A673 (cell line): ENCODE measurements at regions of chr10 and their contacts with region 1.

Region 1: GRCh38 chr10:102583435-102584417 is 60.6 kb upstream of the TRIM8 start:
- DNase-seq: peak; percentile 90
- H3K4me3 ChIP-seq: no peak overlapping the region
- H3K27ac ChIP-seq: no peak overlapping the region
- H3K4me1 ChIP-seq: peaks cover 18% of the 10 kb centered on the region
- H3K27me3 ChIP-seq: no peaks in the 10 kb centered on the region
- CTCF ChIP-seq: peak; percentile 87

Region 2: DNA sequence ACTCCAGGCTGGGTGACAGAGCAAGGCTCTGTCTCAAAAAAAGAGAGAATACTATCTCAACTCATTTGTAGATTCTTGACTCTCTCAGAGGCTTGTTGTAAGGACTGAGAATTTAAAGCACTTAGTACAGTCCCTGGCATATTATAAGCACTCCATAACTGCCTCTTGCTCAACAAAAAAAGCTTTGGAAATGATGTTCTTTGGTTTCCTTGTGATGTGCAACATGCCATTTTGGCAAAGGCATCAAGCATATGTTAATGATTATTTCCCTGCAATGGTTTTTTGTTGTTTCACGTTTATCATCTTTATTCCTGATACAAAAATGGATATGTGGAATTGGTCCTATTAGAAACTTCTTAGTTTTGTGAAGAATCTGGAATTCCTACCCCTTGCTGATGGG is 415.9 kb before region 1 on chr10:
- CTCF ChIA-PET with region 1: interaction called, 5 read pairs
- POLR2A ChIA-PET with region 1: no interaction called
- intact Hi-C with region 1: loop called (anchors 10 kb)
- DNase-seq: no peak
- H3K4me3 ChIP-seq: no peak overlapping the region
- H3K27ac ChIP-seq: no peak overlapping the region
- H3K4me1 ChIP-seq: no peaks in the 10 kb centered on the region
- H3K27me3 ChIP-seq: no peaks in the 10 kb centered on the region
- CTCF ChIP-seq: no peak

Region 3: DNA sequence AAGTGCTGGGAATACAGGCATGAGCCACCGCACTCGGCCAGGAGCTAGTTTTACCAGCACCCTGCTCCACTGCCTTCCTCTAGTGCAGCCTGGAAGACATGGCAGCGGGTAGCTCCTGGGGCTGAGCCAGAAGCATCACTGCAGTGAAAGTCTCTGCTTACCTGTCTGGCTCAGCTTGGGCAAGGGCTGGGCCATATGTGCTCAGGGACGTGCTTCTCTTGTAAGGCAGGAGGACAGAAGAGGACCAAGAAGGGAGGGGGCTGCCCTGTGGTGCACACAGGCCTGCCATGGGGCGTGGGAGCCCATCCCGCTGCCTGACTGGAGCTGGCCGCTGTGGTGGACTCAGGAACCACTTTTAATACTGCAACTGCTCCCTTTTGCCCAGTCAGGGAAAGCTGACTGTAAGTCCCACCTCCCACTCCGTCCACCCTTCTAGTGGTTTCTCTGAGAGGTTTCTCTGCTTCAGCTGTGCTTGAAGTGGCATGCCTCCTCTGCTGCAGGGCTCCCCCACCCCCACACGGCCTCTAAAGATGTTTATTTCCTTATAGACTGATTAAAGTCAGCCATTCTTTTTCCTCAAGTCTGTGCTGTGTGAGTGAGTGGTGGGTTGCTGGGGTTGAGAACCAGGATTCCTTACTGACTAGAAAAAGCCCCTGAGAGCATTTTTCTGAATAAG is 107.1 kb before region 1 on chr10:
- CTCF ChIA-PET with region 1: interaction called, 13 read pairs
- POLR2A ChIA-PET with region 1: no interaction called
- intact Hi-C with region 1: loop called (anchors 5 kb)
- DNase-seq: no peak
- H3K4me3 ChIP-seq: no peak overlapping the region
- H3K27ac ChIP-seq: no peak overlapping the region
- H3K4me1 ChIP-seq: no peaks in the 10 kb centered on the region
- H3K27me3 ChIP-seq: no peaks in the 10 kb centered on the region
- CTCF ChIP-seq: no peak

Region 4: GRCh38 chr10:102484021-102484420 is 99.7 kb before region 1 on chr10:
- CTCF ChIA-PET with region 1: interaction called, 4 read pairs
- POLR2A ChIA-PET with region 1: no interaction called
- intact Hi-C with region 1: loop called (anchors 5 kb)
- DNase-seq: no peak
- H3K4me3 ChIP-seq: no peak overlapping the region
- H3K27ac ChIP-seq: no peak overlapping the region
- H3K4me1 ChIP-seq: no peaks in the 10 kb centered on the region
- H3K27me3 ChIP-seq: no peaks in the 10 kb centered on the region
- CTCF ChIP-seq: no peak

Region 5: DNA sequence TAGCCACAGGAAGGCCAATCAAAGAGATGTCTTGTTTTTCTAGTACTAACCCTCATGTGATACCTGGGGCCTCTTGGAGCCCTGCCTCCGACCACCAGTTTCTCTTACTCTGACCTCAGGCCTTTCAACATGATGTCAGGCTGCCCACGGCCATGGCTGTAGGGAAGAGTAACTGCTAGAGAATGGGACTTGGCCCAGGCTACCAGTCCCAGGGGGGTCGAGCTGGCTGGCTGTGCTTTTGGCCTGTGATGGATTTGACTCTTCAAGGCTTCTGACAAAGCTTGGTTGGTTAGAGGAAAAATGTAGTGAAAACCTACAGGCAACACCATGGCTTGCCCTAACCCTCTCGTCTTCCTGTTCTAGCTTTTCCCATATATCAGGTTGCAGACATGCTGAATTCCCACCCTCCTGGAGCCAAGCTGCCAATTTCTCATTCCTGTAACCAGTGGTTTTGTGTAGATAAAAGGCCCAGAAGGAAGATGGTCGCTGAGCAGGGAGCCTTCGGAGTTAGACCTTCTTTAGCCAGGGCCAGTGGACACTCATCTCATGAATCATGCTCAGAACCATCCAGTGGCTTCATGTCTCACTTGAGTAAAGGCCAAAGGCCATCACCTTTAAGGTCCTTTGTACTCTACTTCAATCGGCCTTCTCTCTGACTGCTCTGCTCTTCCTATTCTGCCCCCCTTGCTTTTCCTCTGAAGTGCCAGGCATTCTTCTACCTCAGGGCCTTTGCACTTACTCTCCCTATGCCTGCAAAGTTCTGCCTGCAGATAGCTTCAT is 60.3 kb before region 1 on chr10:
- CTCF ChIA-PET with region 1: no interaction called
- POLR2A ChIA-PET with region 1: no interaction called
- intact Hi-C with region 1: no loop called
- DNase-seq: no peak
- H3K4me3 ChIP-seq: no peak overlapping the region
- H3K27ac ChIP-seq: no peak overlapping the region
- H3K4me1 ChIP-seq: no peaks in the 10 kb centered on the region
- H3K27me3 ChIP-seq: no peaks in the 10 kb centered on the region
- CTCF ChIP-seq: no peak

Region 6: GRCh38 chr10:102743588-102744373 is 160.1 kb after region 1 on chr10 and contains the start of gene WBP1L:
- CTCF ChIA-PET with region 1: no interaction called
- POLR2A ChIA-PET with region 1: no interaction called
- intact Hi-C with region 1: no loop called
- DNase-seq: peak; percentile 99
- H3K4me3 ChIP-seq: peak within 1 kb of the TSS; percentile 85
- H3K27ac ChIP-seq: peak within 1 kb of the TSS; percentile 77
- H3K4me1 ChIP-seq: peaks cover 6% of the 10 kb centered on the region
- H3K27me3 ChIP-seq: no peaks in the 10 kb centered on the region
- CTCF ChIP-seq: no peak
- total RNA-seq, gene WBP1L: 20.0 and 20.3 TPM in 2 replicates